ENCODE measurements at regions of chr3 and their contacts with region 1.

Region 1: DNA sequence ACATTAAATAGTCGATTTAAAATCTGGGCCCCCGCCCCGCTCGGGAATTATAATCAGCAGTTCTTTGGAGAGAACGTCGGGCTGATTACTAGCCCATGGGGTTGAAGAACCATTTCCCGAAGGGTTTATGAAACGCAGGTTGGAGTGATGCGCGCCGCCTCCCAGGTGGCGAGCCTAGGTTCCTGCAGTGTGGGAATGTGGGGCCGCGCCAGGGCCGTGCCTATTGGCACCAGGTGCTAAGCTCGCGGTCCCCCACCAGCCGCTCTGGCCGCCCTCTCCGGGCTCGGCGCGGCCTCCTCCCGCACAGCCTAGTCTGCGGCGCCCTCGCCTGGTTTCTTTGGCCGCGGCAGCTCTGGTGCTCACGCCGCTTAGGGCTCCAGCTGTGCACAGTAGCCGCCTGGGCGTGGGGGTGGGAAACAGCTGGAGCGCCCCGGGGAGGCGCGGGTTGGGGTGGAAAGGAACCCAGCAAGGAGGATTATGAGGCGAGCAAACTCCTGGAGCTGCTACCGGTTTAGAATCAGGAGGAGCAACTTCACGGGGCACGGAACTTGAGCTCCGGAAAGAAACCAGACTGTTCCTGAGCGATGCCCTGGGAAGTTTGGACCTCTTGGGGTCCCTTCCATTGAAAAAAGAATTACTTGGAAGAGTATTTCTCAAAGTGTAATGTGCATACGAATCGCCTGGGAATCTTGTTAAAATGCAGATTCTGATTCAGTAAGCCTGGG is 5.6 kb upstream of the MECOM start:
- DNase-seq: peak; percentile 86
- ATAC-seq: peak; percentile 83
- H3K4me3 Mint-ChIP-seq: peak overlapping the region; percentile 82
- H3K27ac Mint-ChIP-seq: peak overlapping the region; percentile 54; the same call in 1 of the 2 replicates
- H3K4me1 Mint-ChIP-seq: peaks cover 63% of the 10 kb centered on the region
- H3K27me3 Mint-ChIP-seq: peaks cover 62% of the 10 kb centered on the region
- CTCF ChIP-seq: peak; percentile 41; the same call in 1 of the 2 replicates

Region 2: DNA sequence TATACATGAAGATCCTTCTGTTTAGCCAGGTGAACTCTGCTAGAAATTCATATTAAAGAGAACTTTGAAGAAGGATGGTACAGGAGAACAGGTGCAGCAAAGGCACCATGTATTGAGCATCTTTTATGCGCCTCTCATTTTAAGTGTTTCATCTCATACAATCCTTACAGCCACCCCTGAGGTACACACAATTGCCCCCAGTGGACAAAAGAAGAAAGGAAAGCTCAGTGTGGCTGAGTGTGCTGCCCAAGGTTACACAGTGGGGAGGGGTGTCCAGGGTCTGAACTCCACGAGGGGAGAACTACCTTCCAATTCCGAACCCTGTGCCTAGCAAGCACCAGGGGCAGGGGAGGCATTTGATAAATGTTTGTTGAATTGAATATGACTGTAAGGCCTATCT is 104.2 kb before region 1 on chr3:
- CTCF ChIA-PET with region 1: no interaction called
- POLR2A ChIA-PET with region 1: no interaction called
- DNase-seq: no peak
- ATAC-seq: peak; percentile 78
- H3K4me3 Mint-ChIP-seq: no peak overlapping the region
- H3K27ac Mint-ChIP-seq: no peak overlapping the region
- H3K4me1 Mint-ChIP-seq: peaks cover 9% of the 10 kb centered on the region
- H3K27me3 Mint-ChIP-seq: no peaks in the 10 kb centered on the region
- CTCF ChIP-seq: no peak

Region 3: DNA sequence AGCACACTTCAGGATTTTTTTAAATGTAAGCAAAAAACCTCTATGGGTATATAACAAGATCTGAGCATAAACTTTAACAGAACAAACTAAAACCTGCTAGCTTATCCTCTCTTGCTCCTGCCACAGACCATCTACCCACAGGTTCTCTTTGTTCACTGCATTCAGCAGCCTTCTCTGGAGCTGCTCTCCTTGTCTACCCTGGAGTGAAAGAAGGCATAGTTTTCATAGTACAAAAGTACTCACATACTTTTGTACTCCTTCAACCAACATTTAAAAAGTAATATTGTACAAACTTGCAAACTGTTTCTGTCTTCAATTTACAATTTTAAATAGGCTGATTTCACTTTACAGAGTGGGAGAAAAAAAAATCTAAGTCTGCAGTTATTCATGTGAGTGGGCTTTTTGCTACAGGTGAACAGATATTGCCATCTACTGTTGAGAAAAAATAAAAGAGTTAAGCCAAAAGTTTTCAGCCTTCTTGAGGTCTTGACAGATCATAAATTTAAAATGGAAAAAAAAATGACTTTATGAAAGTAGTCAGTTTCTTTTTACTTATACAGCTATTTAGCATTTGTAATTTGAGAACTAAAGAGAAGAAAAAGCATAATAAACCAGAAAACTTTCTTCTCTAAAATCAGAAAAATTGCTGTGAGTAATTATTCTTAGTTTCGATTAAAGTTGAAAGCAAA is 75.4 kb after region 1 on chr3:
- CTCF ChIA-PET with region 1: interaction called, 24 read pairs
- POLR2A ChIA-PET with region 1: no interaction called
- DNase-seq: no peak
- ATAC-seq: peak; percentile 89
- H3K4me3 Mint-ChIP-seq: no peak overlapping the region
- H3K27ac Mint-ChIP-seq: no peak overlapping the region
- H3K4me1 Mint-ChIP-seq: peaks cover 29% of the 10 kb centered on the region
- H3K27me3 Mint-ChIP-seq: no peaks in the 10 kb centered on the region
- CTCF ChIP-seq: no peak; the same call in 1 of the 2 replicates

Measured in WTC11 (cell line).